Colonic mucosa (tissue), 4 donors: ENCODE measurements at regions of chr4 and their contacts with region 1.

Region 1: DNA sequence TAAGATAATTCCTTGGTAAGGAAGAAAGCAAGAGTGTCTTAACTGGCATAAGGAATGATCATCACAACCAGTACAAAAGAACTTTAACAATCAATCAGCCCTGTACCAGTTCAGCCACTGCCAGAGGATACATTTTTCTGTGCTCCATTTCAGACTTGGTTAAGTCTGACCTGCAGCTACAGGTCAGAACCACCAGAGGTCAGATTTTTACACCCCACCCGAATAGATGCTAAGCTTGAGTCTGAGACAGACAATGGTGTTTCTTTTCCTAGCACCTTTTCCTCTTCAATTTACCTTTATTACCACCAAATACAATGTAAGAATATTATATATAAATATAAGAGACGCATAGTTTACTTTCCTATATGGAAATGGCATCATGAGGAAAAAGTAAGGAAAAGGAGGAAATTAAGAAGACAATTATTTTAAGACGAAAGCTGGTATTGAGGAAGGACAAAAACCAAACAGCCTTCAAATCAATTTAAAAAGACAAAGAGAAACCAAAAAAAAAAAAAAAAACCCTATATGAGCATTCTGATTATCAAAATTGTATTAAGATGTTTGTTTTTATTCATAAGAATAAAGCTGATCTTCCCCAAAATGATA is 215.3 kb upstream of the TTC29 start:
- DNase-seq: peak; percentile 22
- H3K4me3 ChIP-seq: no peak overlapping the region
- H3K27ac ChIP-seq: no peak overlapping the region
- H3K4me1 ChIP-seq: no peaks in the 10 kb centered on the region
- H3K27me3 ChIP-seq: no peaks in the 10 kb centered on the region
- CTCF ChIP-seq: peak; percentile 74

Region 2: GRCh38 chr4:147050356-147050765 is 110.7 kb before region 1 on chr4:
- intact Hi-C with region 1: no loop called
- DNase-seq: no peak
- H3K4me3 ChIP-seq: no peak overlapping the region
- H3K27ac ChIP-seq: no peak overlapping the region
- H3K4me1 ChIP-seq: no peaks in the 10 kb centered on the region
- H3K27me3 ChIP-seq: no peaks in the 10 kb centered on the region
- CTCF ChIP-seq: no peak

Region 3: GRCh38 chr4:147371661-147372060 is 210.7 kb after region 1 on chr4:
- intact Hi-C with region 1: loop called (anchors 10 kb)
- DNase-seq: no peak
- H3K4me3 ChIP-seq: no peak overlapping the region
- H3K27ac ChIP-seq: no peak overlapping the region
- H3K4me1 ChIP-seq: no peaks in the 10 kb centered on the region
- H3K27me3 ChIP-seq: no peaks in the 10 kb centered on the region
- CTCF ChIP-seq: no peak

Region 4: DNA sequence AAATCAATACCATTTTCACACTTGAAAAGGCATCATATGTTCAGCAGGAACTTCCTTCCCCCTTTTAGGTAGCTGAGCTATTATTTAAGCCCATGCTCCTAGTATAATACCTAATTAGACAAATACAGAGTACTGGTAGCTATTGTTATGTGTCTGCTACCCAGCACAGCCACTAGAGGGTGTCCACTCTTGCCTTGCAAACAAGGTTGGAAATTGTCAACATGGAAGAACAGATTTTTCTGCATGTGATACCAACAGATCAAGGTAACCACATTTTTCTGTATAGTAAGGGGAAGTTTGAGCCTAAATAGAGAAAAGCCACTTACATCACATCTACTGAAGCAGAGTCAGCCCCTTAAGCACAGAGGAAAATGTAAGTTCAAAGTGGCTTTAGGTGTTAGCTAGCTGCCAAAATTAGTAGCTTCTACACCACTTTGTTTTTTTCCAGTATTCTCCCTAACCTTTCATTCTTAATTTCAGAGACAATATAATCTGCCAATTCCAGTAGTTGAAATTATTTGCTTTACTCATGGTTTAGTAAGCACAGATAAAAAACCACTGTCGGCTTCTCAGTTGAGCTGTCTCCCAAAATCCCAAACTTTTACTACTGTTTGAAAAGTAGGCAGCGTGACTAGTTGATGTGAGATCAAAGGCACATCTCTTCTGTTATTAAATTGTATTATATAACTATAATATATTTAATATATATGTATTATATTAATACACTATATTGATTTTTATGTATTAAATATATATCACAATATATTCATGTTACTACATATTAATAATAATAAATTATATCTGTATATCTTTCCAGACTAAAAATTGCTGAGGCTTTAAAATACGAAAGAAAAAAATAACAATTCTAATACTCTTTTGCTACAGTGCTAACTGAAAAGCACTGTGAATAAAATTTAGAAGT is 358.1 kb after region 1 on chr4:
- intact Hi-C with region 1: loop called (anchors 10 kb)
- DNase-seq: peak; percentile 33
- H3K4me3 ChIP-seq: no peak overlapping the region
- H3K27ac ChIP-seq: no peak overlapping the region
- H3K4me1 ChIP-seq: no peaks in the 10 kb centered on the region
- H3K27me3 ChIP-seq: no peaks in the 10 kb centered on the region
- CTCF ChIP-seq: peak; percentile 69

Region 5: GRCh38 chr4:147590249-147590920 is 429.4 kb after region 1 on chr4:
- intact Hi-C with region 1: loop called (anchors 5 kb)
- DNase-seq: peak; percentile 40
- H3K4me3 ChIP-seq: no peak overlapping the region
- H3K27ac ChIP-seq: no peak overlapping the region
- H3K4me1 ChIP-seq: no peaks in the 10 kb centered on the region
- H3K27me3 ChIP-seq: no peaks in the 10 kb centered on the region
- CTCF ChIP-seq: peak; percentile 42